ENCODE measurements at regions of chr19 and their contacts with region 1.

Region 1: GRCh38 chr19:38229585-38230073 is 5.6 kb upstream of the DPF1 start:
- DNase-seq: no peak
- ATAC-seq: peak; percentile 92
- H3K4me3 ChIP-seq: peak overlapping the region; percentile 48 to 57
- H3K27ac ChIP-seq: no peak overlapping the region
- H3K4me1 ChIP-seq: peaks cover 16% of the 10 kb centered on the region
- H3K27me3 ChIP-seq: peaks cover 2% of the 10 kb centered on the region; the same call in 1 of the 2 replicates
- CTCF ChIP-seq: no peak

Region 2: GRCh38 chr19:38173291-38174041 is 56.2 kb before region 1 on chr19:
- CTCF ChIA-PET with region 1: interaction called, 18 read pairs
- POLR2A ChIA-PET with region 1: no interaction called
- in situ Hi-C with region 1: no loop called
- intact Hi-C with region 1: no loop called
- DNase-seq: no peak
- ATAC-seq: no peak; the same call in 1 of the 2 replicates
- H3K4me3 ChIP-seq: no peak overlapping the region
- H3K27ac ChIP-seq: no peak overlapping the region
- H3K4me1 ChIP-seq: no peaks in the 10 kb centered on the region
- H3K27me3 ChIP-seq: no peaks in the 10 kb centered on the region
- CTCF ChIP-seq: no peak

Region 3: GRCh38 chr19:38245826-38246498 is 16.3 kb after region 1 on chr19:
- CTCF ChIA-PET with region 1: interaction called, 15 read pairs
- POLR2A ChIA-PET with region 1: interaction called, 5 read pairs
- in situ Hi-C with region 1: no loop called
- intact Hi-C with region 1: no loop called
- DNase-seq: no peak
- ATAC-seq: no peak
- H3K4me3 ChIP-seq: no peak overlapping the region
- H3K27ac ChIP-seq: peak overlapping the region; percentile 26
- H3K4me1 ChIP-seq: peaks cover 30% of the 10 kb centered on the region
- H3K27me3 ChIP-seq: no peaks in the 10 kb centered on the region
- CTCF ChIP-seq: no peak

Region 4: DNA sequence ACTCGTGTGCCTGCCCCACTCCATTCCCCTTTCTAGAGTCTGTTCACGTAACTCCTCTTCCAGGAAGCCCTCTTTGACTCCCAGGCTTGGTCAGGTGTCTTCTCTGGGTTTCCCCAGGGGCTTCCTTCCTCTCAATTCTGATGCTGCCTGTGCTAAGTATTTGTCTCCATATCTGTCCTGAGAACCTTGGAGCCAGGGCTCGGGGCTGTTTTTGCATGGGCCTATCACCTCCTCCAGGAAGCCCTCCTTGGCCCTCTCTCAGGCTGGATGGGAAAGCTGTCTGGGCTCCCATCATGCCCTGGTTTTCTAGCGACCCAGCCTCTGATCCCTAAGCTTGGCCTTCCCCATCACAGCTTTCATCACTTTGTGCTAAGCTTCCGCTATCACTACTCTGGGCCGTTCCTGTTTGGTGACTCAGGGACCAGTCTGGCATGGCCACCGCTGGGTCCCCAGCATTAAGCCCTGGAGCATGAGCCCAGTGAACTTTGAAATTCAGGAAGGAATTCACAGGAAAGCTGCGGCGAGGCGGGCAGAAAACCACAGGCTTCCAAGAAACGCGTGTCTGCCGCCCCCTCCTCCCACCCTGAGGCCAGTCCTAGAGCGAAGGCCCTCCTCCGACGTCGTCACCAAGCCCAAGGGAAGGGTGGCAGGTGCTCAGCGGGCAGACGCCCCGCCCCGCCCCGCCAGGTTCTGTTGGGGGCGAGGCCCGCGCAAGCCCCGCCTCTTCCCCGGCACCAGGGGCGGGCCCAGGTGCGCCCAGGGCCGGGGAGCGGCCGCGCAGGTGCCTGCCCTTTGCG is 34.3 kb after region 1 on chr19:
- CTCF ChIA-PET with region 1: no interaction called
- POLR2A ChIA-PET with region 1: no interaction called
- in situ Hi-C with region 1: no loop called
- intact Hi-C with region 1: no loop called
- DNase-seq: no peak
- ATAC-seq: peak; percentile 74
- H3K4me3 ChIP-seq: peak overlapping the region; percentile 65 to 97
- H3K27ac ChIP-seq: peak overlapping the region; percentile 81
- H3K4me1 ChIP-seq: peaks cover 32% of the 10 kb centered on the region
- H3K27me3 ChIP-seq: no peaks in the 10 kb centered on the region
- CTCF ChIP-seq: no peak

Region 5: GRCh38 chr19:38303517-38304349 is 74.1 kb after region 1 on chr19 and contains the start of gene C19orf33:
- CTCF ChIA-PET with region 1: interaction called, 3 read pairs
- POLR2A ChIA-PET with region 1: interaction called, 12 read pairs
- in situ Hi-C with region 1: no loop called
- intact Hi-C with region 1: no loop called
- DNase-seq: peak; percentile 86
- ATAC-seq: peak; percentile 57
- H3K4me3 ChIP-seq: peak within 1 kb of the TSS; percentile 71 to 88
- H3K27ac ChIP-seq: peak within 1 kb of the TSS; percentile 90
- H3K4me1 ChIP-seq: peaks cover 61% of the 10 kb centered on the region
- H3K27me3 ChIP-seq: no peaks in the 10 kb centered on the region
- CTCF ChIP-seq: no peak
- total RNA-seq, gene C19orf33: 201 TPM

Region 6: GRCh38 chr19:38387550-38388348 is 158.1 kb after region 1 on chr19 and contains the start of gene GGN:
- CTCF ChIA-PET with region 1: interaction called, 17 read pairs
- POLR2A ChIA-PET with region 1: no interaction called
- in situ Hi-C with region 1: no loop called
- intact Hi-C with region 1: no loop called
- DNase-seq: peak; percentile 94
- ATAC-seq: peak; percentile 83
- H3K4me3 ChIP-seq: peak within 1 kb of the TSS; percentile 55 to 93
- H3K27ac ChIP-seq: peak within 1 kb of the TSS; percentile 76
- H3K4me1 ChIP-seq: peaks cover 11% of the 10 kb centered on the region
- H3K27me3 ChIP-seq: no peaks in the 10 kb centered on the region
- CTCF ChIP-seq: no peak
- total RNA-seq, gene GGN: 1.4 TPM

Region 7: GRCh38 chr19:39038098-39038497 is 808.5 kb after region 1 on chr19:
- CTCF ChIA-PET with region 1: interaction called, 10 read pairs
- POLR2A ChIA-PET with region 1: no interaction called
- in situ Hi-C with region 1: no loop called
- intact Hi-C with region 1: no loop called
- DNase-seq: no peak
- ATAC-seq: peak; percentile 96
- H3K4me3 ChIP-seq: peak overlapping the region in 1 of 2 experiments; percentile 5; a peak in 2 of 4 replicates
- H3K27ac ChIP-seq: peak overlapping the region; percentile 3; the same call in 1 of the 2 replicates
- H3K4me1 ChIP-seq: peaks cover 11% of the 10 kb centered on the region
- H3K27me3 ChIP-seq: no peaks in the 10 kb centered on the region
- CTCF ChIP-seq: no peak